ENCODE measurements at regions of chr5 and their contacts with region 1.

Region 1: DNA sequence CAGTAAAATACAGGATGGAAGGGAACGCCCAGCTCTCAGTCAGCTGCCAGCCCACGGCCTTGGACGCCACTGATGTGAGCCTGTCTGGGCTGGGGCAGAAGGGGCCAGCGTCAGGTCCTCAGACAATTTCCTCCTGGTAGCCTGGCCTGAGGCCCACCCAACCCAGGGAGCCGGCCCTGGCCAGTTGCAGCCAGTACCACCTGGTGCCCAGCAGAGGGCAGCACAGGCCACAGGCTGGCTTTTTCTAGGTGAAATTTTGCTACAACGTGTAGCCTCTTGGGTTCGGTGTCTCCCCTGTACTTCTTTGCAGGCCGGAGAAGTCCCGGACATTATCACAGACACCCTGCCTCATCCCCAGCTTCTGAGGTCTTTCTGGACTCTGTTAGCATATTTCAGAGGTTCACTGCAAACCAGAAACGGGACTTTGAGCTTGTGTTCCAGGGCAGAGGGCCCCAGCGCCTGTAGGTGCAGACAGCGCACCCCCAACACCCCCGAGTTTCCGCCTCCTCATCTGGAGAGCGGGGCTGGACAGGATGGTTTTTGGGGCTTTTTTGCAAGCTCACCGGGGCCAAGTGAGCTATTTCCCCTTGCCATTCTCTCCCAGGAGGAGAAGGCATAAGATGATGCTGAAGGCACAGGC is 45.9 kb upstream of the KCNMB1 start:
- H3K4me3 Mint-ChIP-seq: no peak overlapping the region
- H3K27ac Mint-ChIP-seq: no peak overlapping the region
- H3K4me1 Mint-ChIP-seq: no peaks in the 10 kb centered on the region
- H3K27me3 Mint-ChIP-seq: peaks cover 5% of the 10 kb centered on the region

Region 2: GRCh38 chr5:169494941-169495548 is 940.0 kb before region 1 on chr5:
- intact Hi-C with region 1: no loop called
- H3K4me3 Mint-ChIP-seq: no peak overlapping the region
- H3K27ac Mint-ChIP-seq: no peak overlapping the region
- H3K4me1 Mint-ChIP-seq: no peaks in the 10 kb centered on the region
- H3K27me3 Mint-ChIP-seq: no peaks in the 10 kb centered on the region

Region 3: DNA sequence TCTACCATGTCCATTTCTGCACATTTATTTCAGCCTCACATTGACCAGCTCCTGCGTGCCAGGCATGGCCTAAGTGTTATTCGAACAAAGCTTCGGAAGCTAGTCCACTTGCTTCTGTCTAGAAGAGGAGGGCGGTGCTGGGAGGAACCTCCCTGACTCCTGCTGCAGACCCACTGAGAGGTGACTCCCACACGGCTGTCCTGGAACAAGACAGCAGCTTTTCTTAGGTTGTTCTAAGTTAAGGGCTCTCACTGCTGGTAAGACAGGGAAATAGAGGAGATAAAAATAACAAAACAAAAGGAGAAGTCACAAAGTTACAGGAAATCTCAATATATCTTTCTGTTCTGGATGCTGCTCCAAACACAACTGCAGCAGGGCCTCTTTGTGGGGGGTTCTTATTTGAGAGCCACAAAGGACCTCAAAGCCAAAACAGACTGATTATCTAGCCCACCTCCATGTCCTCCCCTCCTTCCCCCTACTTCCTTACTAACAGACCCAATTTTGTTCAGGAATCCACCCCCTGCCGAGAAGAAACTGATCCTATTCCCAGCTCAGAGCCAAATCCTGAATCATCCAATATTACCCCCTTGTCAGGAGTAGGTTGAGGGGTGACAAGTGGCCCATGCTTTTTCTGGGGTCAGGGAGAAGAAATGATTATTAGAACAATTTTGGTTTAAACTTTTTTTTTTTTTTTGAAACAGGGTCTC is 40.4 kb after region 1 on chr5:
- intact Hi-C with region 1: no loop called
- H3K4me3 Mint-ChIP-seq: no peak overlapping the region
- H3K27ac Mint-ChIP-seq: peak overlapping the region; percentile 77
- H3K4me1 Mint-ChIP-seq: peaks cover 34% of the 10 kb centered on the region
- H3K27me3 Mint-ChIP-seq: no peaks in the 10 kb centered on the region

Region 4: DNA sequence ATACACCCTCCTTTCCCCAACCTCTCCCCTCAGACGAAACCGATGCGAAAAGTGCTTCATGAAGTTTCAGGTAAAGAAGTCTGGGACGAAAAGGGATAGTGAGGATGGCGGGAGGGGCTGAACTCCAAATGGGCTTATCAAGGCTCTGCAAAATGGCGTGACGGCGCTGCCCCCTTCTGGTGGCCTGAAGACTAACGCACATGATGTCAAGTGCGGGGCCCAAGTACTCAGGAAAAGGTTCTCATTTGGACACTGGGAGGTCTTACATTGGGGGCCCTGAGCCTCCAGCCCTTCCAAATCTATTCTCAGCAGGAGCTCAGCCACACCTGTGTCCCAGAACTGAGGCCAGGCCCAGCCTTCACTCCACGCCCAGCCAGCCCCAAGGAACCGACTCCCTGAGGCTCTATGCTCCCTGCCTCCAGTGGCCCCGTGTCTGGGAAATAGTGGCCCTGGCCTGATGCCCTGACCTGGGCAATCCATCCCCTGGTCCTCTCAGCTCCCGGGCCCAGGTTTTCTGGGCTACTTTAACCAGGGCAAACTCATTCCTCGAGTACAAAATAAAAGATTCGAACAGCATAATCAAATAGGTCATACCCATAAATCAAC is 188.6 kb after region 1 on chr5:
- intact Hi-C with region 1: loop called (anchors 1 kb)
- H3K4me3 Mint-ChIP-seq: no peak overlapping the region
- H3K27ac Mint-ChIP-seq: no peak overlapping the region
- H3K4me1 Mint-ChIP-seq: no peaks in the 10 kb centered on the region
- H3K27me3 Mint-ChIP-seq: peaks cover 18% of the 10 kb centered on the region

Measured in dendritic cell treated with granulocyte-macrophage colony-stimulating factor and Interleukin-4, amounts not matched to agents 40 ng/mL and 50 ng/mL, for 4 days (primary cell).